Caco-2 (cell line): ENCODE measurements at regions of chr2 and their contacts with region 1.

Region 1: GRCh38 chr2:219218732-219219701 is at the start of gene ABCB6:
- DNase-seq: peak; percentile 97
- H3K4me3 ChIP-seq: peak within 1 kb of the TSS; percentile 89
- H3K4me3 Mint-ChIP-seq: peak within 1 kb of the TSS; percentile 96
- H3K27ac Mint-ChIP-seq: peak within 1 kb of the TSS; percentile 95
- H3K4me1 ChIP-seq: peaks cover 18% of the 10 kb centered on the region
- H3K4me1 Mint-ChIP-seq: no peaks in the 10 kb centered on the region
- H3K27me3 ChIP-seq: no peaks in the 10 kb centered on the region
- H3K27me3 Mint-ChIP-seq: no peaks in the 10 kb centered on the region
- CTCF ChIP-seq: no peak
- total RNA-seq, gene ABCB6: 66.0 and 68.6 TPM in 2 replicates

Region 2: DNA sequence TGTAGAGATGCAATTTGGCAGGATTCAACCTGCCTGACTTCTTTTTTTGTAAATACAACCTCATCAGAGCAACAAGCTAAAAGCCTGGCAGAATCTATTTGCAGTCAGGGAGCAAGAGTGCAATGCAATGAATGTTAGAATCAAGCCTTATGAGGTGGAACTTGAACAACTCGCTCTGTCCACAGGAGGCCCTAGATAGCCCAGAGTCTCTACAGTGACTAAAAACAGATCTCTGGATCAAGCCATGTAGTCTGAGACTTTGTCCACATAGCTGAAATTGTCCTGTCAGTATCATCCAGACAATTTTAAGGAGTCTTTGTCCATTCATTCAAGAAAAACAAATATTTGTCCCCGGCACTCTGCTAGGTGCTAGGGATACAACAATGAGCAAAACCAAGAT is 291.6 kb before region 1 on chr2:
- CTCF ChIA-PET with region 1: no interaction called
- POLR2A ChIA-PET with region 1: no interaction called
- intact Hi-C with region 1: no loop called
- DNase-seq: no peak
- H3K4me3 ChIP-seq: no peak overlapping the region
- H3K4me3 Mint-ChIP-seq: no peak overlapping the region
- H3K27ac Mint-ChIP-seq: no peak overlapping the region
- H3K4me1 ChIP-seq: no peaks in the 10 kb centered on the region
- H3K4me1 Mint-ChIP-seq: no peaks in the 10 kb centered on the region
- H3K27me3 ChIP-seq: no peaks in the 10 kb centered on the region
- H3K27me3 Mint-ChIP-seq: no peaks in the 10 kb centered on the region
- CTCF ChIP-seq: no peak

Region 3: DNA sequence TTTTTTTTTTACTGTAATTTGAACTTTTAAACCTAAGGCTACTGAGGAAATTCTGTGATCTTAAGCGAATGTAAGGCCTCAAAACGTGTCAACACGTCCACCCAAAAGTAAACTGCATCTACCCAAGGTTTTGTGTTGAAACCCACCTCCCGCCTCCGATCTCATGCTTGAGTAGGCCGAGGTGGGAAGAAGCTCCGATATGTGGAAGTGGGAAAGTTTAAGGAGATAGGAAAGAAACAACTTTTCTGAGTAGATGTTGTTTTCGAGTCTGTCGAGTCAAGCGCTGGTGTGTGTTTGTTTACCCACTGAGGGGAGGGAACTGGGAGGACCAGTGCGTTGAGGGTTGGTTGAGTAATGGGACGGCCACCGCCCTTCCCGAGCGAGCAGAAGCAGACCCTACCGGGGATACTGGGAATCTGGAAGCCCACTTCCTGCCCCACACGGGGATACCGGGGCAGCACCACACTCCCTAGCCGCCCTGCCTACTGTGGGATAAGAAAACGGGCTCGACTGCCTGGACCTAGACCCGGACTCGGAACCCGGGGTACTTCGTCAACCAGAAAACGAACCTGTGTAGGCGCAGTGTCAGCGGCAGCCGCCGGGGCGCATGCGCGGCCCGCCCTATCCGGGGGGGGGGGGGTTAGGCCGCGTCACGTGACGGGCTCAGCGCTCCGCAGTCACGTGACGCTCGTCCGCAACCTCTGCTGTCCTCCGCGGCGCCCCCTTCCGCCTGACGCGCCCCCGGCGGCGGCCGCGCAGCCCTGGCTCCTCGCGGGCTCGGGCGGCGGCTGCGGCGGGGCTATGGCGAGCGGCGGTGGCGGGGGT is 41.3 kb before region 1 on chr2 and contains the start of gene RETREG2:
- CTCF ChIA-PET with region 1: interaction called, 3 read pairs
- POLR2A ChIA-PET with region 1: interaction called, 13 read pairs
- intact Hi-C with region 1: loop called (anchors 1 kb)
- DNase-seq: peak; percentile 89 to 90
- H3K4me3 ChIP-seq: peak within 1 kb of the TSS; percentile 93
- H3K4me3 Mint-ChIP-seq: peak within 1 kb of the TSS; percentile 90
- H3K27ac Mint-ChIP-seq: peak within 1 kb of the TSS; percentile 89
- H3K4me1 ChIP-seq: peaks cover 12% of the 10 kb centered on the region
- H3K4me1 Mint-ChIP-seq: peaks cover 18% of the 10 kb centered on the region
- H3K27me3 ChIP-seq: no peaks in the 10 kb centered on the region; the same call in 1 of the 2 replicates
- H3K27me3 Mint-ChIP-seq: no peaks in the 10 kb centered on the region
- CTCF ChIP-seq: peak; percentile 17 to 38
- total RNA-seq, gene RETREG2: 59.5 and 62.0 TPM in 2 replicates

Region 4: GRCh38 chr2:219229305-219230058 is 10.5 kb after region 1 on chr2 and contains the starts of genes ANKZF1 and ATG9A:
- CTCF ChIA-PET with region 1: no interaction called
- POLR2A ChIA-PET with region 1: interaction called, 27 read pairs
- intact Hi-C with region 1: loop called (anchors 1 kb)
- DNase-seq: peak; percentile 99
- H3K4me3 ChIP-seq: peak within 1 kb of the TSS; percentile 69
- H3K4me3 Mint-ChIP-seq: peak within 1 kb of the TSS; percentile 100
- H3K27ac Mint-ChIP-seq: peak within 1 kb of the TSS; percentile 100
- H3K4me1 ChIP-seq: 0 out of 2 replicates have a peak, but pooled peaks cover 4% of the 10 kb centered on the region
- H3K4me1 Mint-ChIP-seq: no peaks in the 10 kb centered on the region
- H3K27me3 ChIP-seq: no peaks in the 10 kb centered on the region
- H3K27me3 Mint-ChIP-seq: no peaks in the 10 kb centered on the region
- CTCF ChIP-seq: no peak
- total RNA-seq, gene ANKZF1: 50.7 and 51.5 TPM in 2 replicates
- total RNA-seq, gene ATG9A: 59.6 and 62.9 TPM in 2 replicates

Region 5: GRCh38 chr2:219245148-219245898 is 26.3 kb after region 1 on chr2 and contains the starts of genes GLB1L and STK16:
- CTCF ChIA-PET with region 1: interaction called, 6 read pairs
- POLR2A ChIA-PET with region 1: interaction called, 11 read pairs
- intact Hi-C with region 1: loop called (anchors 1 kb)
- DNase-seq: peak; percentile 94
- H3K4me3 ChIP-seq: peak within 1 kb of the TSS; percentile 73
- H3K4me3 Mint-ChIP-seq: peak within 1 kb of the TSS; percentile 82
- H3K27ac Mint-ChIP-seq: peak within 1 kb of the TSS; percentile 90
- H3K4me1 ChIP-seq: peaks cover 33% of the 10 kb centered on the region
- H3K4me1 Mint-ChIP-seq: peaks cover 23% of the 10 kb centered on the region
- H3K27me3 ChIP-seq: no peaks in the 10 kb centered on the region
- H3K27me3 Mint-ChIP-seq: no peaks in the 10 kb centered on the region
- CTCF ChIP-seq: no peak
- total RNA-seq, gene GLB1L: 3.3 and 4.3 TPM in 2 replicates
- total RNA-seq, gene STK16: 26.1 and 26.6 TPM in 2 replicates